Activated T-helper 1 cell treated with anti-CD3 and anti-CD28 coated beads, Interleukin-12 subunit alpha, Interleukin-12 subunit beta, Interleukin-2, Interleukin-4 antibody, amounts not matched to agents 30 ng/mL and 10 ng/mL and 1 ng/mL, durations not matched to agents 14 hours and 24 hours and 36 hours (primary cell): ENCODE measurements at regions of chr10 and their contacts with region 1.

Region 1: GRCh38 chr10:119131512-119132240 is 27.8 kb downstream of the DENND10 start:
- DNase-seq: peak; percentile 65
- H3K4me3 Mint-ChIP-seq: peak overlapping the region; percentile 80
- H3K27ac Mint-ChIP-seq: peak overlapping the region; percentile 92
- H3K4me1 Mint-ChIP-seq: peaks cover 66% of the 10 kb centered on the region
- H3K27me3 Mint-ChIP-seq: no peaks in the 10 kb centered on the region

Region 2: GRCh38 chr10:119030421-119031250 is 101.0 kb before region 1 on chr10:
- intact Hi-C with region 1: loop called (anchors 5 kb)
- DNase-seq: peak; percentile 39
- H3K4me3 Mint-ChIP-seq: peak overlapping the region; percentile 73
- H3K27ac Mint-ChIP-seq: peak overlapping the region; percentile 40
- H3K4me1 Mint-ChIP-seq: peaks cover 25% of the 10 kb centered on the region
- H3K27me3 Mint-ChIP-seq: peaks cover 7% of the 10 kb centered on the region

Region 3: GRCh38 chr10:119103903-119104652 is 27.6 kb before region 1 on chr10 and contains the start of gene DENND10:
- intact Hi-C with region 1: loop called (anchors 1 kb)
- DNase-seq: peak; percentile 68
- H3K4me3 Mint-ChIP-seq: peak within 1 kb of the TSS; percentile 87
- H3K27ac Mint-ChIP-seq: peak within 1 kb of the TSS; percentile 58
- H3K4me1 Mint-ChIP-seq: peaks cover 22% of the 10 kb centered on the region
- H3K27me3 Mint-ChIP-seq: no peaks in the 10 kb centered on the region
- total RNA-seq, gene DENND10: 20.1 and 25.4 TPM in 2 replicates

Region 4: GRCh38 chr10:119149723-119150122 is 18.0 kb after region 1 on chr10:
- intact Hi-C with region 1: no loop called
- DNase-seq: no peak
- H3K4me3 Mint-ChIP-seq: no peak overlapping the region
- H3K27ac Mint-ChIP-seq: peak overlapping the region; percentile 18
- H3K4me1 Mint-ChIP-seq: no peaks in the 10 kb centered on the region
- H3K27me3 Mint-ChIP-seq: no peaks in the 10 kb centered on the region

Region 5: DNA sequence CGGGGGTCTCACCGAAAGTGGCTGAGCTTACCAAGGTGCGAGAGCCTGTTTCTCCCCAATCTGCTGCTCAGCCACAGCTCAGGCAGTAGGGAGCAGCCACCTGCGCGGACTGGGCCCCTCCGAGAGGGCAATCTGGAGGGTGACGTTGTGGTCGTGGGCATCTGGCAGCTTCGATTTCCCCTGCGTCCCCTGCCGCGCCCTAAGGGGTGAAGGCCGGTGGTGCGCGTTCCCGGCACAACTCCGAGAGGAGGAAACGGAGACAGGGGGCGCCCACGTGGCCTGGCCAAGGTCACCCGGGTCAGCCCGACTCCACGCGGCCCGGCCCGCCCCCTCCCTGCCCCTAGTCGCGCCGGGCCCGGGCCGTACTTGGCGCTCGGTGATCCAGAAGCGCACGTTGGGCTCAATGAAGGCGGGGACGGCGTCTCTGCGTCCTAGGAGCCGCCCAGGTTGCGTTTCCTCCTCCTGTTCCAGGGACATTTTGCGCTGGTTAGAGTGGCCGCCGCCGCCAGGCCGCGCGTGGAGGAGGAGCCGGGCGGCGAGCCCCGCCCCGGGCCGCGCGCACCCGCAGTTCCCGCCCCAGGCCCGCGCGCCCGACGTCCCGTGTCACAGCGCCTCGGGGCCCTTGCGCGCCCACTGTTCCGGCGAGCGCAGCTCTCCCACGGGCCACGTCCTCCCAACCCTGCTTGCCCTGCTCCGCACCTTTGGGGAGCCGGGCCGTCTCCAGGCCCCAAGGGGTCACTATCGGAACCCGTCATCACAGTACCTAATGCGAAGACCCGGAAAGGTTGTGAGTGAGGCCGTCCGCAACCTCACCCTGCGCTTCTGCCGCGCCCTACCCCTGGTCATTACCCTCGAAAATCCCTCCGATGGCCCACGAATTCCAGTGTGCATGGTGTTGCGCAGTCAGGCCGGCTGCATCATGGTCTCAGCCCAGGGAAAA is 33.8 kb after region 1 on chr10 and contains the start of gene SFXN4:
- intact Hi-C with region 1: loop called (anchors 1 kb)
- DNase-seq: peak; percentile 82
- H3K4me3 Mint-ChIP-seq: peak within 1 kb of the TSS; percentile 91
- H3K27ac Mint-ChIP-seq: peak within 1 kb of the TSS; percentile 94
- H3K4me1 Mint-ChIP-seq: peaks cover 45% of the 10 kb centered on the region
- H3K27me3 Mint-ChIP-seq: no peaks in the 10 kb centered on the region
- total RNA-seq, gene SFXN4: 58.2 and 58.7 TPM in 2 replicates

Region 6: DNA sequence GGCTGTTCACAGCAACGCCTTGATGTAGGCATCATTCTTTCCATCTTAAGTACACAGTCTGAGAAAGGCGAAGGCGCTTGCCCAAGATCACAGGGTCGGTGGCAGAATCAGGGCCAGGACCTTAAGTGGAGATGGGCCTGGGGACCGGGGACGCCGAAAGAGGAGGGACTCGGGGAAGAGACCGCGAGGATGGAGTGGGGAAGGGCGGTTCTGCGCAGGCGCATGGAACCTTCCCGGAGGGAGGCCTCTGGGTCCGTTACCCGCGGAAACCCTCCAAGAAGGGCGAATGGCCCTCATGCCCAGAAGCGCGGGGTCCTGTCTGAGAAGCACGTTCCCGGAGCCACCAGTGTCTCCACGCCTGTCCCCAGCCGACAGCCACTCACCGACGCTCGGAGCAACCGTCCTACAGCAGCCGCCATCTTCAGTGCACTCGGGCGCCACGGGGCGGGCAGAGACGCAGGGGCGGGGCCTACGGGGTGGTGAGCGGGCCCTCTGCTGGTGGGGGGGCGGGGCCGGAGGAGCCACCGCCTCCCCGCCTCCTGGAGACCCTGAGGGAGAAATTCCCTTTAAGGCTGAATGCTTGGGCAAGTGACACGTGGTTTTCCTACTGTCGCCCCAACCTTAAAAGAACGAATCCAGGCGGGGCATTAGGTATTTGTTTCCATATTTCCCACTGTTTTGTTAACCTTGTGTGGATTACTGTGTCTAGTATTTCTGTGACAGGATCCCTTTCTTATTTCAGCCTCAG is 46.9 kb after region 1 on chr10 and contains the start of gene PRDX3:
- intact Hi-C with region 1: loop called (anchors 1 kb)
- DNase-seq: peak; percentile 89
- H3K4me3 Mint-ChIP-seq: peak within 1 kb of the TSS; percentile 100
- H3K27ac Mint-ChIP-seq: peak within 1 kb of the TSS; percentile 100
- H3K4me1 Mint-ChIP-seq: peaks cover 30% of the 10 kb centered on the region
- H3K27me3 Mint-ChIP-seq: no peaks in the 10 kb centered on the region
- total RNA-seq, gene PRDX3: 158 and 163 TPM in 2 replicates

Region 7: DNA sequence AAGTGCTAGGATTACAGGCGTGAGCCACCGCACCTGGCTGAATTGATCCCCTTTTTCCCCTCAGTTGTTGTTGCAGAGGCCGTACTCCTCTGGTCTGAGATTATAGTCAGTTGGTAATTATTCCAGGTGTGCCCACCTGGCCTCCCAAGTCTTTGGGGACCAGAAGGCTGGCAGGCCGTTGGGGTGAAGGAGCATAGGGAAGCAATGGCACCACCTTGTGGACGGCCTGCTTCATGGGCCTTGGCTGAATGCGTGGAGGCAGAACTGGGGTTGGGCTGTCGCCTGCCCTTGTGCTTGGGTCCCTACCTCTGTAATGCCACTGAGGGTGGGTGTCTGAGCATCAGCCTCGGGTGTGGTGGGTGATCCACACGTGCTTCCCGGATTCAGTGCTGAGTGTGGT is 285.2 kb after region 1 on chr10:
- intact Hi-C with region 1: loop called (anchors 1 kb)
- DNase-seq: peak; percentile 51
- H3K4me3 Mint-ChIP-seq: no peak overlapping the region
- H3K27ac Mint-ChIP-seq: no peak overlapping the region
- H3K4me1 Mint-ChIP-seq: no peaks in the 10 kb centered on the region
- H3K27me3 Mint-ChIP-seq: no peaks in the 10 kb centered on the region

Region 8: DNA sequence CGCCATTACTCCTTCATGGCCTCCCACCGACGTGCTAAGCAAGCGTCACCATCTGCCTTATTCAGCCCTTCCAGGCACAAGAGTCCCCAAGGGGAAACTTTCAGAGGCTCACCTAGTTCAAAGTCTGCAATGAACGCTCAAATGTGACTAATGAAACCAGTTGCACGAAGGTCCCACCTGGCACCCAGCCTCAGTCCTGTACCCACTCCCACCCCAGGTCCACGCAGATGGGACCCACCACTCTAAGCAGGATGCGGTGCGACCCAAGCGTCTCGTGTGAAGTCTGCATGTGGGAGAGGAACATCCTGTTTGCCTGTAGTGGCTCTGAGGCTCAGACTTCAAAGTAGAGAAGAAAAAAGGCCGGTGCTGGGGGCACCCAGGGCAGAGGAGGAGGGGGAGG is 370.5 kb after region 1 on chr10:
- intact Hi-C with region 1: loop called (anchors 5 kb)
- DNase-seq: peak; percentile 71
- H3K4me3 Mint-ChIP-seq: peak overlapping the region; percentile 70
- H3K27ac Mint-ChIP-seq: peak overlapping the region; percentile 94
- H3K4me1 Mint-ChIP-seq: peaks cover 90% of the 10 kb centered on the region
- H3K27me3 Mint-ChIP-seq: no peaks in the 10 kb centered on the region